ENCODE measurements at regions of chr18 and their contacts with region 1.

Region 1: GRCh38 chr18:71899707-71900472 is 644.3 kb downstream of the CBLN2 start:
- DNase-seq: no peak
- ATAC-seq: no peak

Region 2: DNA sequence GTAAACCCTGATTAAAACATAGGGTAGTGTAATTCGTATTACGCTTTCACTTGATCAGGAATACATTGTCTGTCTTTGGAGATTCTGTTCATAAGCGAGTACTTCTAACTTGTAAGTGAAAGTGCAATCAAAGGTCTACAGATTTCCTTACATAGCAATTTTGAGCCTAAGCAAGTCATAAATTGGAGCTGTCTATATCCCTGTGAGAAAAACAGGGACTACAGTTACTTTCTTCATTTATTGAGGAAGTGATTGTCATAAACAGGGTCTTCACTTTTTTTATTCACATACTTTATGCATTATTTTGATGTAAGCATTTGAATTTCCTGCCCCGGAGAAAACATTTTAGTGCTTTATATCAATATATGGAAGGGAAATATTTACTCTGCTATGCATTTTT is 26.2 kb before region 1 on chr18:
- intact Hi-C with region 1: no loop called
- DNase-seq: no peak
- ATAC-seq: no peak

Region 3: DNA sequence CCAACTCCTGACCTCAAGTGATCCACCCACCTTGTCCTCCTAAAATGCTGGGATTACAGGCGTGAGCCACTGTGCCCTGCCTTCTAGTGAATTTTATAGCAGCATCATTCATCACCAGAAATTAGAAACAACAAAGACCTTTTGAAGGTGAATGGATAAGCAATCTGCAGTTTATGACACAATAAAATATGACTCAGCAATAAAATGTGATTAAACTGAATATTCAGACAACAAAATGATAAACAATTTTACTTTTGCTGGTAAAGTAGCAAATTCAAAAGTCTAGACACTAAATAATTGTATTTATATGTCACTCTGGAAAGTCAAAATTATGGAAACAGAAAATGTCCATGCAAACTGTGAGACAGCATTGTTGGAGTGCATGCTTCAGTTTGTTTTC is 12.4 kb before region 1 on chr18:
- intact Hi-C with region 1: loop called (anchors 1 kb)
- DNase-seq: no peak
- ATAC-seq: no peak

Region 4: DNA sequence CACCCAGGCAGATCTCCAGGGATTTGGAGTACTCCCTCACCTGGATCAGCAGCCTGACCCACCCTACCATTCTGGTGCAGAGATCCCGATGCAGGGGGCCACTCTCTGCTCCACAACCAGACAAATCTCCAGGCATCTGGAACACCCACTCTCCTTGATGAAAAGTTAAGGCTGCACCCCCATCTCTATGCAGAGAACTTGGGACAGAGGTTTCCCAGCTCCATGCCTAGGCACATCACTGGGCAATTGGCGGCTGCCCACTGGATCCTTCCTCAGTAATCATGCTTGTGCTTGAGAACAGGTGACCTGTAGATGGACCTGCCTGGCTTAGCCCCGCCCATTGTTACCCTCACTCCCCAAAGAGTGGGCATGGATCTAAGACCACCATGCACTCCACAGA is 19.3 kb after region 1 on chr18:
- intact Hi-C with region 1: no loop called
- DNase-seq: no peak
- ATAC-seq: no peak